Activated CD8-positive, alpha-beta memory T cell treated with anti-CD3 and anti-CD28 coated beads, Interleukin-2, amount 10 ng/mL, durations not matched to agents 7 days and 5 days (primary cell): ENCODE measurements at regions of chr1 and their contacts with region 1.

Region 1: DNA sequence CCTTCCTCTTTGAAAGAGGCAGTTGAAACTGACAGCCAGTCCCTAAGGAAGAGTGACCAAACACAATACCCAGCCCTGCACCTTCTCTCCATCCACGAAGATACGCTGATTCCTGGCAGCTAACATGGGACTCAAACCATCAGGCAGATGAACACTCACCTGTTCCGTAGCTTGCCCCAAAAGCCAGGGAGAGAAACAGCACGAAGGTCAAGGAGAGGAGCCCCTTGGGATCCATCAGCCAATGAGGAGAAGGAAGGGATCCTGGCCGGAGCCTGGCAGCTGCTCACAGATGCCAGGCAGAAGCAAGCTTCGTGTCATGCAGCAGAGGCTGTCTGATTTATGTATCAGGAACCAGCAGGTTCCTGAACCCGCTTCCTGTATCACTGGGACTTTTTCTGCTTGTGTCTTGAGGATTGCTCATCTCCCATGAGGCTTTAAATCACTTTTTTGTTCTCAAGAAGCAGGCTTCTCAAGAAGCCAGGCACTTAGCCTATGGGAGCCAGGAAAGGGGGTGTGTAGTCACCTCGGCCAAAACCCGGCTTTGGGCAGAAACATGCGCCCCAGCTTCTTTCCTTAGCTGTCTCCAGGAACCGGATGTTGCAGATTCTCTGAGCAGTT is at the start of gene SLAMF1:
- DNase-seq: peak; percentile 60
- ATAC-seq: peak; percentile 63
- H3K4me3 Mint-ChIP-seq: peak within 1 kb of the TSS; percentile 97
- H3K27ac Mint-ChIP-seq: peak within 1 kb of the TSS; percentile 92
- H3K4me1 Mint-ChIP-seq: peaks cover 61% of the 10 kb centered on the region
- H3K27me3 Mint-ChIP-seq: no peaks in the 10 kb centered on the region
- total RNA-seq, gene SLAMF1: 59.3 to 105 TPM

Region 2: DNA sequence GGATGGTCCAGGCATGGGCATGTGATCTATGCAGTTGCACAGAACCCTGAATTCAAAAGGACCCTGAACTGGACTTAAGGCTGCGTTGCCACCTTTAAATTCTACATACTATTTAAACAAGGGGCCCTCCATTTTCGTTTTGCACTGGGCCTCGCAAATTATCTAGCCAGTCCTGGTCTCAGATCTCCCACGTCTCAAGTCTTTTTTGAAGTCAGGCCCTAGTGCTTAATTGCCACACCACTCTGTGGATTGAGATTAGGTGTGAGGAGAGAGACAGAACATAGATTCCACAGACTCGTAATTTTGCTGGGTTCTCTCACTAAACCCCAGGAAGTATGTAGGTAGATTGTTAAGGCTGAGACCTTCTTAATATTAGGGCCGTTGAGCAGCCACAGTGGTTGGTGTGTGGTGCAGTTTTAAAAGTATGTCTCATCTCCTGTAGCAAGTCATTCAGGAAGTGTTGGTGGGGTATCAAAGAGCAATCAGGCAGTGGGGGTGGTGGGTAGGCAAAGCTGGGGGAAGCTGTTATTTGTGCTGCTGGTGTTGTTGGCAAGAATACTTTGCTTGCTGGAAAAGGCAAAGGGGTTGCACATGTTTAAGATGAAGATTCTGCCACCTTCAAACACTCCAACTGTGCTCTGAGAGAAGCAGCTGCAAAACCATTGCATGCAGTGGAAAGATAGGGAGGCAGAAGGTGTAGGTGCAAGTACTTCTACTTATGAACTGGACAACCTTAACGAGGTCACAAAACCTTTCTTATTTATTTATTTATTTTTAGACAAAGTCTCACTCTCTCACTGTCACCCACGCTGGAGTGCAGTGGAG is 78.8 kb before region 1 on chr1:
- CTCF ChIA-PET with region 1: no interaction called
- DNase-seq: peak; percentile 89
- ATAC-seq: peak; percentile 95
- H3K4me3 Mint-ChIP-seq: peak overlapping the region; percentile 58
- H3K27ac Mint-ChIP-seq: peak overlapping the region; percentile 99
- H3K4me1 Mint-ChIP-seq: peaks cover 91% of the 10 kb centered on the region
- H3K27me3 Mint-ChIP-seq: no peaks in the 10 kb centered on the region

Region 3: GRCh38 chr1:160618763-160619274 is 28.0 kb before region 1 on chr1:
- CTCF ChIA-PET with region 1: interaction called, 15 read pairs
- DNase-seq: peak; percentile 68
- ATAC-seq: no peak
- H3K4me3 Mint-ChIP-seq: no peak overlapping the region
- H3K27ac Mint-ChIP-seq: peak overlapping the region; percentile 66
- H3K4me1 Mint-ChIP-seq: peaks cover 71% of the 10 kb centered on the region
- H3K27me3 Mint-ChIP-seq: no peaks in the 10 kb centered on the region